SK-N-SH (cell line): ENCODE measurements at regions of chr10 and their contacts with region 1.

Region 1: DNA sequence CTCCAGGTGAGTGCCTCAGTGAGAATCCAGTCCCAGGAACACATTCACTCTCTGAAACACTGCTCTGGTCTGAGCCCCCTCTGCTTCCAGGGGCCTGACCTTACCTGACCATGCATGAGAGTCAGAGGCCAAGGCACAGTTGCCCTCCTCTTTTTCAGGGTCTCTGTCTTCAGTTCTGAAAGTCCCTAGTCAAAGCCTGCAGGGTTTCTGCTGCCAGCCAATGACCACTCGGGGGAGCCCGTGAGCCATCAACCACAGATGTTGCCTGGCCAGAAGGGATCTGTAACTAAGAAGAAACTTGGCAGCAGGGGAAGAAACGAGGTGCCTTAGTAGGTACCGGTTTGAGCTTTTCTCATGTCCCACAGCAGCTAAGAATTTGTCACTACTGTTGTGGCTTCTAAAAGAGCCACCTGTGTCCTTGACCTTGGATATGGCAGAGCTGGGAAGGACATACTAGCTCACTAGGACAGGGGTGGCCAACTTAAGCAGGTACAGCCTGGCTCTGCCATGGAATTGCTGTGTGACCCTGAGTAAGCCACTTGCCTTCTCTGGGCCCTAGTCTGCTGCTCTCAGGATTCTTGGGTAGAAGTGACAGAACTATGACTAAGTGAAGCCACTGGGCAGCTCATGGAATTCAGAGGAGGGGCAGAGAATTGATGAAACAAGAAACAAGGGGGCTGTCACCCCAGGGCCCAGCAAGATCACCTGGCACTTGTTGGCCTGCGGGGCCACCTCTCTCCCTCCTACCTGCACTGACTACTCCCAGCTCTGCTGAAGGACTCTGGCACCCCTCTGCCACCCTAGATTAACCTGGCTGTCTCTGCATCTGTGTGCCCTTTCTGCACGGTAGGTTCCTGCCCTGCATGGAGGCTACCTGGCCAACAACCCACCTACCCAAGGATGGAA is 83.8 kb upstream of the GPR26 start:
- DNase-seq: peak; percentile 77
- H3K4me3 ChIP-seq: no peak overlapping the region; a peak in 1 of 4 replicates
- H3K27ac ChIP-seq: no peak overlapping the region
- H3K4me1 ChIP-seq: no peaks in the 10 kb centered on the region; a peak in 1 of 4 replicates
- H3K27me3 ChIP-seq: no peaks in the 10 kb centered on the region
- CTCF ChIP-seq: peak; percentile 72
- EP300 ChIP-seq: no peak
- RAD21 ChIP-seq: peak; percentile 89

Region 2: GRCh38 chr10:123548770-123549169 is 33.6 kb before region 1 on chr10:
- CTCF ChIA-PET with region 1: no interaction called
- POLR2A ChIA-PET with region 1: no interaction called
- DNase-seq: no peak
- H3K4me3 ChIP-seq: no peak overlapping the region
- H3K27ac ChIP-seq: no peak overlapping the region
- H3K4me1 ChIP-seq: no peaks in the 10 kb centered on the region
- H3K27me3 ChIP-seq: no peaks in the 10 kb centered on the region
- CTCF ChIP-seq: no peak
- EP300 ChIP-seq: no peak
- RAD21 ChIP-seq: no peak

Region 3: DNA sequence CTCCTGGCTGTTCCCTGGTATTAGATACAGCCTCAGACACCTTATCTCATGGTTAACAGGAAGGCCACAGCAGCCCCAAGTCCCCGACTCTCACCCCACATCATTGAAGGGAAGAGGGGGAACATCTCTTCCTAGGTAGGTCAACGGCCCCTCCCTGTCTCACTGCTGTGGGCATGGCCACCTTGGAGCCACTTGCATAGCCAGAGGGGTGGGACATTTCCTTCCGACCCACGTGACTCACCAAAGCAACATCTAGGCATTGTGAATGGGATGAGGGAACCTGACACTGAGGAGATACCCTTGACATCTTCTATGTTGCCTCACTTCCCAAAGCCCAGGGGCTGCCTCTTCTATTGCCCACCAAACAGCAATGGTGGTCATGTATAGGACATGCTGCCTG is 15.3 kb after region 1 on chr10:
- CTCF ChIA-PET with region 1: interaction called, 10 read pairs
- POLR2A ChIA-PET with region 1: no interaction called
- DNase-seq: no peak
- H3K4me3 ChIP-seq: no peak overlapping the region
- H3K27ac ChIP-seq: no peak overlapping the region
- H3K4me1 ChIP-seq: no peaks in the 10 kb centered on the region
- H3K27me3 ChIP-seq: no peaks in the 10 kb centered on the region
- CTCF ChIP-seq: no peak
- EP300 ChIP-seq: no peak
- RAD21 ChIP-seq: no peak

Region 4: DNA sequence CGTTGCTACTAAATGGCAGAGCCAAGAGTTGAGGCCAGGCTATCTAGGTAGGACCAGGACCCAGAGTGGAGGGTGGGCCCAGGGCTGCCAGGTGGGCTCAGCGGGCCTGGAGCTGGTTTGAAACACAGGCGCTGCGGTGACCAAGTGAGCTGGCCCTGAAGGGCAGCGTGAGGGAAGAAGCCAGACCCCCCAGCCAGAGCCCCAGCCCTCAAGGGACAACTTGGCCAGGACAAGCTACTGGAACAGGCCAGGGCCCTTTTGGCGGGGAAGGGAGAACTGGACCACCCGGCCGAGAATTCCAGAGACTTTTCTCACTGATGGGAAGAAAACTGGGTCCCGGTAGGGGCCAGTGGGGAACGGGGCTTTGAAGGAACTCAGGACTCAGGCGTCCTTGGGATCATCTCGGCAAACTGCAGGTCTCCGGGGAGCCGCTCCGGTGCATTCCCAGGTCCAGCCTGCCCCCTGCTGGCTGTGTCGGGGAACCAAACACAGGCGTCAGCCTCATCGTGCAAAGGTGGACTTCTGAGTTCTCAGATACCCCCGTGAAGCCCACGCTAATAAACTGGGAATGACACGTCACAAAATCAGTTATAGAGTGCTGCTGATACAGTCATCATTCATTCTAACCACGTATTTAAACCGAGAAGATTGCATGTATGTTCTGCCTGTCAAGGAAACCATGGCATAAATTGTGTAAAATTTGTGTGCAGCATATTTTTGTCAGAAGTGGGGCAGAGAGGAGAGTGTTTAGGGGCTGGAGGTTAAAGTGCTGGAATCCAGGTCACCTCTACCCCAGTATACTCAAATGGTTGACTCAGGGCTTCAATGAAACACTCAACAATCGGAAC is 385.3 kb after region 1 on chr10:
- CTCF ChIA-PET with region 1: interaction called, 276 read pairs
- POLR2A ChIA-PET with region 1: no interaction called
- DNase-seq: peak; percentile 91
- H3K4me3 ChIP-seq: peak overlapping the region in 1 of 2 experiments; percentile 31; a peak in 1 of 4 replicates
- H3K27ac ChIP-seq: no peak overlapping the region
- H3K4me1 ChIP-seq: peaks cover 0 to 5% of the 10 kb centered on the region in 2 experiments; a peak in 1 of 4 replicates
- H3K27me3 ChIP-seq: no peaks in the 10 kb centered on the region
- CTCF ChIP-seq: peak; percentile 49
- EP300 ChIP-seq: no peak
- RAD21 ChIP-seq: peak; percentile 93

Region 5: GRCh38 chr10:123974406-123974805 is 392.1 kb after region 1 on chr10:
- CTCF ChIA-PET with region 1: interaction called, 276 read pairs
- POLR2A ChIA-PET with region 1: no interaction called
- DNase-seq: no peak
- H3K4me3 ChIP-seq: no peak overlapping the region
- H3K27ac ChIP-seq: no peak overlapping the region
- H3K4me1 ChIP-seq: no peaks in the 10 kb centered on the region
- H3K27me3 ChIP-seq: no peaks in the 10 kb centered on the region
- CTCF ChIP-seq: no peak
- EP300 ChIP-seq: no peak
- RAD21 ChIP-seq: no peak